B cell (primary cell): ENCODE measurements at regions of chr2 and their contacts with region 1.

Region 1: GRCh38 chr2:84925724-84926376 is 20.4 kb downstream of the TMSB10 start:
- DNase-seq: peak; percentile 97
- ATAC-seq: peak; percentile 86
- H3K4me3 ChIP-seq: peak overlapping the region; percentile 48 to 83 (median 74)
- H3K4me3 Mint-ChIP-seq: peak overlapping the region; percentile 96
- H3K27ac ChIP-seq: peak overlapping the region in 1 of 2 donors; percentile 35
- H3K27ac Mint-ChIP-seq: peak overlapping the region; percentile 91
- H3K4me1 ChIP-seq: peaks cover 26 to 49% of the 10 kb centered on the region in 2 donors
- H3K4me1 Mint-ChIP-seq: peaks cover 50% of the 10 kb centered on the region
- H3K27me3 ChIP-seq: no peaks in the 10 kb centered on the region
- H3K27me3 Mint-ChIP-seq: no peaks in the 10 kb centered on the region
- CTCF ChIP-seq: peak; percentile 100

Region 2: GRCh38 chr2:84459018-84459943 is 466.6 kb before region 1 on chr2 and contains the start of gene SUCLG1:
- CTCF ChIA-PET with region 1: interaction called, 10 read pairs
- POLR2A ChIA-PET with region 1: no interaction called
- intact Hi-C with region 1: loop called (anchors 1 kb)
- DNase-seq: peak; percentile 94
- ATAC-seq: peak; percentile 97
- H3K4me3 ChIP-seq: peak within 1 kb of the TSS; percentile 67 to 95 (median 91)
- H3K4me3 Mint-ChIP-seq: peak within 1 kb of the TSS; percentile 93
- H3K27ac ChIP-seq: peak within 1 kb of the TSS; percentile 84 to 93
- H3K27ac Mint-ChIP-seq: peak within 1 kb of the TSS; percentile 97
- H3K4me1 ChIP-seq: peaks cover 20 to 23% of the 10 kb centered on the region in 2 donors
- H3K4me1 Mint-ChIP-seq: peaks cover 37% of the 10 kb centered on the region
- H3K27me3 ChIP-seq: no peaks in the 10 kb centered on the region
- H3K27me3 Mint-ChIP-seq: no peaks in the 10 kb centered on the region
- CTCF ChIP-seq: no peak
- total RNA-seq, gene SUCLG1: 31.8 and 33.6 TPM in 2 replicates

Region 3: DNA sequence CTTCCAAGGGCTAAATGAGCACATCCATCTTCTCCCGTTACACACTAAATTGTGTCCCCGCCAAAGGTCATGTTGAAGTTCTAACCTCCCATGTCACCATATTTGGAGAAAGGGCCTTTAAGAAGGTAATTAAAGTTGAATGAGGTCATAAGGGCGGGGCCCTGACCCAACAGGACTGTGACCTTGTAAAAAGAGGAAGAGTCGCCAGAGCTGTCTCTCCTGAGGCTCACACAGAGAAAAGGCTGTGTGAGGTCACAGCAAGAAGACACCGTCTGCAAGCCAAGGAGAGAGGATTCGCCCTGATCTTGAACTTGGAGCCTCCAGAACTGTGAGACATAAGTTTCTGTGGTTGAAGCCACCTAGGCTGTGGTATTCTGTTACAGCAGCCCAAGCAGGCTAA is 69.1 kb before region 1 on chr2:
- CTCF ChIA-PET with region 1: interaction called, 12 read pairs
- POLR2A ChIA-PET with region 1: no interaction called
- intact Hi-C with region 1: no loop called
- DNase-seq: peak; percentile 66
- ATAC-seq: peak; percentile 88
- H3K4me3 ChIP-seq: no peak overlapping the region
- H3K4me3 Mint-ChIP-seq: no peak overlapping the region
- H3K27ac ChIP-seq: no peak overlapping the region
- H3K27ac Mint-ChIP-seq: no peak overlapping the region
- H3K4me1 ChIP-seq: peaks cover 11 to 13% of the 10 kb centered on the region in 2 donors
- H3K4me1 Mint-ChIP-seq: peaks cover 24% of the 10 kb centered on the region
- H3K27me3 ChIP-seq: no peaks in the 10 kb centered on the region
- H3K27me3 Mint-ChIP-seq: no peaks in the 10 kb centered on the region
- CTCF ChIP-seq: no peak

Region 4: GRCh38 chr2:84881581-84882414 is 44.1 kb before region 1 on chr2:
- CTCF ChIA-PET with region 1: interaction called, 316 read pairs
- POLR2A ChIA-PET with region 1: interaction called, 13 read pairs
- intact Hi-C with region 1: loop called (anchors 1 kb)
- DNase-seq: peak; percentile 90
- ATAC-seq: peak; percentile 78
- H3K4me3 ChIP-seq: peak overlapping the region; percentile 66 to 98 (median 83)
- H3K4me3 Mint-ChIP-seq: peak overlapping the region; percentile 92
- H3K27ac ChIP-seq: peak overlapping the region; percentile 72 to 92
- H3K27ac Mint-ChIP-seq: peak overlapping the region; percentile 95
- H3K4me1 ChIP-seq: peaks cover 16 to 31% of the 10 kb centered on the region in 2 donors
- H3K4me1 Mint-ChIP-seq: peaks cover 36% of the 10 kb centered on the region
- H3K27me3 ChIP-seq: no peaks in the 10 kb centered on the region
- H3K27me3 Mint-ChIP-seq: no peaks in the 10 kb centered on the region
- CTCF ChIP-seq: peak; percentile 78

Region 5: DNA sequence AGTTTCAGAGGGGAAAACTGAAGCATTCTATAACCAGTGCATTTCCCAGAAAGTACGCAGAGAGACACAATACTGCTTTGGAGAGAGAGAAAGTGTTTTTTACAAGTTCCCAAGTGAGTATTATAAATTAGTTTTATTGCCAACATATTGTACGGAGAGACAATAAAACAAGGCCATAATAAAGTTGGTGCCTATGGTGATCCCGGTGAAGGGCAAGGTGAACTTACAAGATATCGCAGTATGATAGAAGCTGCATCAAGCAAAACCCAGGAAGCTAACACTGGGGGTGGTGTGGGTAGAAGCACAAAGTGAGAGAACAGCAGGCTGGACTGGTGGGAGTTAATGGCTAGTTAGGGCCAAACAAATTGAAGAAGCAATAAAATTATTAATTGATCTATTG is 12.9 kb before region 1 on chr2:
- CTCF ChIA-PET with region 1: interaction called, 159 read pairs
- POLR2A ChIA-PET with region 1: interaction called, 129 read pairs
- intact Hi-C with region 1: no loop called
- DNase-seq: no peak
- ATAC-seq: no peak
- H3K4me3 ChIP-seq: no peak overlapping the region
- H3K4me3 Mint-ChIP-seq: no peak overlapping the region
- H3K27ac ChIP-seq: no peak overlapping the region
- H3K27ac Mint-ChIP-seq: no peak overlapping the region
- H3K4me1 ChIP-seq: peaks cover 25 to 28% of the 10 kb centered on the region in 2 donors
- H3K4me1 Mint-ChIP-seq: peaks cover 33% of the 10 kb centered on the region
- H3K27me3 ChIP-seq: no peaks in the 10 kb centered on the region
- H3K27me3 Mint-ChIP-seq: no peaks in the 10 kb centered on the region
- CTCF ChIP-seq: no peak

Region 6: GRCh38 chr2:84963692-84964405 is 38.0 kb after region 1 on chr2:
- CTCF ChIA-PET with region 1: interaction called, 69 read pairs
- POLR2A ChIA-PET with region 1: no interaction called
- intact Hi-C with region 1: no loop called
- DNase-seq: no peak
- ATAC-seq: no peak
- H3K4me3 ChIP-seq: no peak overlapping the region
- H3K4me3 Mint-ChIP-seq: no peak overlapping the region
- H3K27ac ChIP-seq: no peak overlapping the region
- H3K27ac Mint-ChIP-seq: peak overlapping the region; percentile 82
- H3K4me1 ChIP-seq: peaks cover 47 to 64% of the 10 kb centered on the region in 2 donors
- H3K4me1 Mint-ChIP-seq: peaks cover 62% of the 10 kb centered on the region
- H3K27me3 ChIP-seq: no peaks in the 10 kb centered on the region
- H3K27me3 Mint-ChIP-seq: no peaks in the 10 kb centered on the region
- CTCF ChIP-seq: no peak

Region 7: DNA sequence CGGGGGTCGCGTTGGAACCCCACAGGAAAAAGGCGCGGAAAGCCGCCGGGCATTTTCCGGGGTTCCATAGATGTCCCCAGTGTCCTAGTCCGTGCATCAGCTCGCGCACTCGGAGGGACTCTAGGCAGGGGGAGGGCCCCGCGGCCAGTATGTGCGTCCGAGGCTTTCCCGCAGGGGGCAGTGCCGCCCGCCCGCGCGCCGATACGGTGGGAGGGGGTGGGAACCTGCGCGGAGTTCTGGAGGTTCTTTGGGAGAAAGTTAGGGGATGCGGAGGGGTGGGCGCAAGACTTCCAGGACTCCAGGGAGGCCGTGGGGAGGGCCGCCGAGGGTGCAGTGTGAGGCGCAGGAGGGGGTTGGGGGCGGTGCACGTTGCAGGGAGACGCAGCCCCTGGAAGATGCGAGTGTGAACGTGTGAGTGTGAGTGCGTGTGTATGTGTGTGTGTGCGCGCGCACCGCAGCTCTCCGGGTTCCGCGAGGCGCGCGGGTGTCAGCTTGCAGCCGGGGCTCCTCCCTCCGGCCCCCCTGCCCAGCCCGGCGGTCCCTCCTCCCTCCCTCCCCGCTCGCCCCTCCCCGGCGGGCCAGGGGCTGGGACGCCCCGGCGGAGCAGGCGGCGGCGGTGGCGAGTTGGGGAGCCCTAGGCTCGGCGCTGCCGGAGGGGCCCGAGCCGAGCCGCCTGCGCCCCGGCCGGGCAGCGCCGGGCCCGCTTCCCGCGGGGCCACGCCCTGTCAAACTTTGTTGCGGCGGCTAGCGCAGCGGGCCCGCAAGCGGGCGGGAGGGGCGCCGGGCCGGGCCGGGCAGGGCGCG is 207.2 kb after region 1 on chr2 and contains the start of gene TCF7L1:
- CTCF ChIA-PET with region 1: no interaction called
- POLR2A ChIA-PET with region 1: no interaction called
- intact Hi-C with region 1: loop called (anchors 5 kb)
- DNase-seq: peak; percentile 53
- ATAC-seq: peak; percentile 65
- H3K4me3 ChIP-seq: peak within 1 kb of the TSS in 4 of 5 experiments; percentile 21 to 60 (median 47)
- H3K4me3 Mint-ChIP-seq: peak within 1 kb of the TSS; percentile 80
- H3K27ac ChIP-seq: no peak within 1 kb of the TSS
- H3K27ac Mint-ChIP-seq: peak within 1 kb of the TSS; percentile 26
- H3K4me1 ChIP-seq: peaks cover 19 to 21% of the 10 kb centered on the region in 2 donors
- H3K4me1 Mint-ChIP-seq: peaks cover 16% of the 10 kb centered on the region
- H3K27me3 ChIP-seq: peaks cover 0 to 53% (median 22%) of the 10 kb centered on the region in 4 experiments
- H3K27me3 Mint-ChIP-seq: peaks cover 48% of the 10 kb centered on the region
- CTCF ChIP-seq: no peak
- total RNA-seq, gene TCF7L1: 0.53 and 0.67 TPM in 2 replicates